ENCODE measurements at regions of chrX and their contacts with region 1.

Region 1: GRCh38 chrX:150683536-150684146 is 9.6 kb upstream of the MTMR1 start:
- DNase-seq: peak; percentile 9
- ATAC-seq: peak; percentile 53
- H3K4me3 Mint-ChIP-seq: no peak overlapping the region
- H3K27ac Mint-ChIP-seq: no peak overlapping the region
- H3K4me1 Mint-ChIP-seq: peaks cover 9% of the 10 kb centered on the region
- H3K27me3 Mint-ChIP-seq: no peaks in the 10 kb centered on the region

Region 2: DNA sequence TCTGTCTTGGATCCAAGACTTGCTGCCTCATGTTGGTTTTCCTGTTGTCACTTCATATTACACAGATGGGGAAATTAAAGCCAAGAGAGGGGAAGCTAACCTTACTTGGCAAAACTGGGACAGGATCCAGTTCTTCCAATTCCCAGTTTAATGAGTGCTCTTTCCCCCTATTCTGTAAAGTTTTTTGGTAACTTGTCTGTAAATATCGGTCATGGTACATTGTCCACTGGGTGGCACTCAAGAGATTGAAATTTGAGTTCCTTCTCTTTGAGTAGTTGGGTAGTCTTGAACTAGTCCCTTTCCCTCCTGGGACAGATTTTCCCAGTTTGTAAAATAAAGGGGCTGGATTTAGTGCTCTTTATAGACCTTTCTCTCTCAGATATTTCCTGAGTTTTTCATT is 733.0 kb before region 1 on chrX:
- CTCF ChIA-PET with region 1: interaction called, 3 read pairs
- POLR2A ChIA-PET with region 1: no interaction called
- intact Hi-C with region 1: loop called in 1 of 2 experiments (anchors 2 kb)
- DNase-seq: peak; percentile 8
- ATAC-seq: no peak
- H3K4me3 Mint-ChIP-seq: no peak overlapping the region
- H3K27ac Mint-ChIP-seq: no peak overlapping the region
- H3K4me1 Mint-ChIP-seq: no peaks in the 10 kb centered on the region
- H3K27me3 Mint-ChIP-seq: no peaks in the 10 kb centered on the region

Region 3: DNA sequence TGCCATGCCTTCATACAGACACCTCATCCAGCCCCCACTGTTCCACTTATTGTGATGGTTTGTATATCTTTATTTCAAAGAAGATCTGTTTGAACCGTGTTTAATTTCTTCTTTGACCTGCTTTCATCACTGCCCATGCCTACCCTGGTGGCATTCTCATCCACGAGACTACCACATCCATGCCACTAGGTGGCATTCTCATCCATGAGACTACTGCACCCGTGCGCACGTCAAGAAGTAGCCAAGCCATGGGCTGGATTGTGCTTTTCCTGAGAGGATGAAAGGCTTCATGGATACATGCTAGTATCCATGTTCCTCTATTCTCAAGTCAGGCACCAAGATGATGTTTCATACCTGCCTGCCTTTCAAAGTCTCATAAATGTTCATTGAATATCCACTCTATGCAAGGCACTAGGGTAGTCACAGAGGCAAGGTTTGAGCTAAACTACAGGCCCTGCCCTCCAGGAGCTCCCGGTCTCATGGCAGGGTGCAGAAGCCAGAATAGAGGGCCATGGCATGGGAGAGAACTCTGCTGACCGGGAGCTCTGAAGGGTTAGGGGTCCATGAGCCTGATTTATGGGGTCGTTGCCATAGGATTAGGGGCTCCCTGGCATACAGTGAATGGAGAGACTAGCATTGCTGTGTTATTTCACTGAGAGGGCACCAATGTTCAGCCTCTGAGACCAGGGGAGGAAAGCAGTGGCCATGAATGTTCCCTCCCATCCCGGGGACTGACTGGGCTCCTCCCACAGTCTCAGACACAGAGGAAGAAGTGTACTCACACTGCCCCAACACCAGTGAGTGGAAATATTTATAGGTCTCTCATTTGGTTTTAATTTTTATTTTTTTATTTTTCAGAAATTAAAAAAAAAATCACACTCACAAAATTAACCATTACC is 720.5 kb before region 1 on chrX:
- CTCF ChIA-PET with region 1: no interaction called
- POLR2A ChIA-PET with region 1: no interaction called
- intact Hi-C with region 1: loop called in 1 of 2 experiments (anchors 2 kb)
- DNase-seq: peak; percentile 44
- ATAC-seq: peak; percentile 63
- H3K4me3 Mint-ChIP-seq: no peak overlapping the region
- H3K27ac Mint-ChIP-seq: no peak overlapping the region
- H3K4me1 Mint-ChIP-seq: peaks cover 4% of the 10 kb centered on the region
- H3K27me3 Mint-ChIP-seq: no peaks in the 10 kb centered on the region

Region 4: GRCh38 chrX:150352581-150352980 is 331.1 kb before region 1 on chrX:
- CTCF ChIA-PET with region 1: no interaction called
- POLR2A ChIA-PET with region 1: no interaction called
- intact Hi-C with region 1: no loop called
- DNase-seq: no peak
- ATAC-seq: no peak
- H3K4me3 Mint-ChIP-seq: no peak overlapping the region
- H3K27ac Mint-ChIP-seq: no peak overlapping the region
- H3K4me1 Mint-ChIP-seq: no peaks in the 10 kb centered on the region
- H3K27me3 Mint-ChIP-seq: no peaks in the 10 kb centered on the region

Region 5: GRCh38 chrX:150715184-150715583 is 31.5 kb after region 1 on chrX:
- CTCF ChIA-PET with region 1: interaction called, 43 read pairs
- POLR2A ChIA-PET with region 1: interaction called, 3 read pairs
- intact Hi-C with region 1: loop called (anchors 1 kb)
- DNase-seq: no peak
- ATAC-seq: no peak
- H3K4me3 Mint-ChIP-seq: no peak overlapping the region
- H3K27ac Mint-ChIP-seq: peak overlapping the region; percentile 47
- H3K4me1 Mint-ChIP-seq: peaks cover 29% of the 10 kb centered on the region
- H3K27me3 Mint-ChIP-seq: no peaks in the 10 kb centered on the region